K562 (cell line): ENCODE measurements at regions of chr3 and their contacts with region 1.

Region 1: DNA sequence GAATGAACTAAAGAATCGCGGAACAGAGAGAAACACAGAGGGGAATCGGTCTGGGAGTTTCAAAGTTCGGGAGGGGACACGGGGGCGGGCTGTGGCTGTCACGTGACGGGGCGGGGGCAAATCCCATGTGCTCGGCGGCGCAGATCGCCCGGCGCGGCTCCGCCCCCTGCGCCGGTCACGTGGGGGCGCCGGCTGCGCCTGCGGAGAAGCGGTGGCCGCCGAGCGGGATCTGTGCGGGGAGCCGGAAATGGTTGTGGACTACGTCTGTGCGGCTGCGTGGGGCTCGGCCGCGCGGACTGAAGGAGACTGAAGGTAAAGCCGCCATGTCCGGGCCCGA is at the start of gene EIF4G1:
- DNase-seq: peak; percentile 94 to 97 (median 96)
- ATAC-seq: peak; percentile 92
- H3K4me3 ChIP-seq: peak within 1 kb of the TSS; percentile 100
- H3K27ac ChIP-seq: peak within 1 kb of the TSS; percentile 94
- H3K4me1 ChIP-seq: peaks cover 13 to 31% of the 10 kb centered on the region in 2 experiments; a peak in 4 of 5 replicates
- H3K27me3 ChIP-seq: no peaks in the 10 kb centered on the region
- CTCF ChIP-seq: no peak
- EP300 ChIP-seq: no peak
- POLR2A ChIP-seq: peak; percentile 62
- RAD21 ChIP-seq: no peak
- polyA plus RNA-seq, gene EIF4G1: 4.6 to 6.5 TPM

Region 2: DNA sequence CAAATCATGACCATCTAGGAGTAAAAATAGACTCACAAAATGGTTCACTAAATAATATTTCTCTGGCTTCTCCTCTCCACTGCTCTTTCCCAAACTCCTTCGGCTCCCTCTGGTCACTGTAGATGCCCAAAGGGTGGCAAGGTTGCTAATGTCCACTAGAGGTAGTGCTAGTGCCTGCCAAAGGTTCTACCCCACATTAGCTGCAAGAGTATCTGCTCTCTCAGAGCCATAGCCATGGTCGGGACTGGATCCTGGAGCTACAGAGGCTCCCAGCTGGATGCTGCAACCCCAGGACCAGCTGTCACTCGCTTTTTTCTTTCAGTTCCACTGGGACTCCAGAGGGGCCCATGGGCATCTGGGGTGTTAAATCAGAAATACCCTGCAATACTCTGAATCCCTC is 274.3 kb before region 1 on chr3:
- CTCF ChIA-PET with region 1: no interaction called
- POLR2A ChIA-PET with region 1: no interaction called
- in situ Hi-C with region 1: no loop called
- intact Hi-C with region 1: no loop called
- DNase-seq: peak; percentile 22 to 53 (median 34)
- ATAC-seq: peak; percentile 94
- H3K4me3 ChIP-seq: no peak overlapping the region
- H3K27ac ChIP-seq: no peak overlapping the region
- H3K4me1 ChIP-seq: no peaks in the 10 kb centered on the region
- H3K27me3 ChIP-seq: peaks cover 0 to 5% of the 10 kb centered on the region in 2 experiments; a peak in 2 of 5 replicates
- CTCF ChIP-seq: peak; percentile 66 to 79 (median 68)
- EP300 ChIP-seq: no peak
- POLR2A ChIP-seq: no peak
- RAD21 ChIP-seq: peak; percentile 79 to 82

Region 3: DNA sequence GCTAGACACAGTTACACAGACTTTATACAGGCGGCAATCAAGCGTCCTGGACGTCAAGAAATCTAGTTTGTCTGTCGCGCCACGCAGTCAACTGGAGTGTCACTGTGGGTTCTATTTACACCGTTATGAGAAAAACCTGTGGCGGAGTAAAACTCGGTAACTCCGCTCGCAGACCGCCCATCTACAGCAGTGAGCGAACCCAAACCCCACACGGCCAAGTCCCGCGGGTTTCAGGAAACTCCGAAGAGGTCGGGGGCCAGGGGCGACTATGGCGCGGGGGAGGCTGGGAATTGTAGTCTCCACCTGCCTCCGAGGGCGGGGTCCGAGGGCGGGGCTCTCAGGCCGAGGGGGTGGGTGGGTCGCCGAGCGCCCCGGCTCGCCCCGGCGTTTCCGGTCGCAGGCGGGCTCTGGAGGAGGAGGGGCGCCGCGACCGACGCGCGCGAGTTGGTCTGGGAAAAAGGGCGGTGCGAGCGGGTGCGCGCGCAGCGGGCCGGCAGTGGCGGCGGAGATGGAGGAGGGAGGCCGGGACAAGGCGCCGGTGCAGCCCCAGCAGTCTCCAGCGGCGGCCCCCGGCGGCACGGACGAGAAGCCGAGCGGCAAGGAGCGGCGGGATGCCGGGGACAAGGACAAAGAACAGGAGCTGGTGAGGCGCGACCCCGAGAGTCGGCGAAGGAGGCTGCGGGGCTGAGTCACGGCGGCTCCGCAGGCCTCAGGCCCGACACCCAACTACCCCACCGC is 15.4 kb before region 1 on chr3 and contains the start of gene PSMD2:
- CTCF ChIA-PET with region 1: no interaction called
- POLR2A ChIA-PET with region 1: interaction called, 8 read pairs
- in situ Hi-C with region 1: no loop called
- intact Hi-C with region 1: loop called (anchors 2 kb)
- DNase-seq: peak; percentile 97 to 99 (median 98)
- ATAC-seq: peak; percentile 98
- H3K4me3 ChIP-seq: peak within 1 kb of the TSS; percentile 84
- H3K27ac ChIP-seq: peak within 1 kb of the TSS; percentile 88
- H3K4me1 ChIP-seq: peaks cover 7 to 9% of the 10 kb centered on the region in 2 experiments; a peak in 4 of 5 replicates
- H3K27me3 ChIP-seq: no peaks in the 10 kb centered on the region
- CTCF ChIP-seq: no peak
- EP300 ChIP-seq: no peak
- POLR2A ChIP-seq: peak; percentile 91
- RAD21 ChIP-seq: no peak
- polyA plus RNA-seq, gene PSMD2: 152 to 173 TPM

Region 4: DNA sequence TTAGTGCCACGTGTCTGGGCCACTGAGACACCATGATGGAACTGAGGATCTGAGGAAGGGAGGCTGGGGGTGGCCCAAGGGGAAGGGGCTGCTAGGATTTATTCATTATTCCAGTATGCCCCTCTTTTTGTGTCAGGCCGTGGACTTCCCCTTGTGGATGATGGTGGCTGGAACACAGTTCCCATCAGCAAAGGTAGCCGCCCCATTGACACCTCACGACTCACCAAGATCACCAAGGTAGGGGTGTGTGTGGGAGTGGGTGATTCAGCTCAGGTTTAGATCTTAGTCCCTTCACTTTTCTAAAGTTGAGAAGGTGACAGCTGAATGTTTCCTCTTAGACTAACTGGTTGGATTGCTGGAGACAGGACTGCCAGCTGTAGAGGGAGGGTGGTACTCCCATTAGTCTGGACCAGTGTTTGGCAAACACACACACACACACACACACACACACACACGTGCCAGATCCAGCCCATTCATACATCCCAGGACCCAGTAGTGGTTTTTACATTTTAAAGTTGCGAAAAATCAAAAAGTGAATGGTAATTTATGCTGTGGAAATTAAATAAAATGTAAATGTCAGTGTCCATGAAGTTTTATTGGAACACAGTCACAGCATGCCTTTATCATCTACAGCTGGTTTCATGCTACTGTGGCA is 11.5 kb after region 1 on chr3:
- CTCF ChIA-PET with region 1: no interaction called
- POLR2A ChIA-PET with region 1: interaction called, 24 read pairs
- in situ Hi-C with region 1: no loop called
- intact Hi-C with region 1: no loop called
- DNase-seq: no peak
- ATAC-seq: no peak
- H3K4me3 ChIP-seq: no peak overlapping the region
- H3K27ac ChIP-seq: no peak overlapping the region
- H3K4me1 ChIP-seq: peaks cover 0 to 3% of the 10 kb centered on the region in 2 experiments; a peak in 2 of 5 replicates
- H3K27me3 ChIP-seq: no peaks in the 10 kb centered on the region
- CTCF ChIP-seq: no peak
- EP300 ChIP-seq: no peak
- POLR2A ChIP-seq: no peak
- RAD21 ChIP-seq: no peak